PC-9 (cell line): ENCODE measurements at regions of chr12 and their contacts with region 1.

Region 1: GRCh38 chr12:53065975-53066931 is 12.9 kb downstream of the SPRYD3 start:
- DNase-seq: peak; percentile 53 to 74
- H3K4me3 ChIP-seq: no peak overlapping the region
- H3K27ac ChIP-seq: peak overlapping the region; percentile 50; the same call in 1 of the 2 replicates
- H3K4me1 ChIP-seq: peaks cover 25% of the 10 kb centered on the region
- H3K27me3 ChIP-seq: no peaks in the 10 kb centered on the region
- CTCF ChIP-seq: peak; percentile 91

Region 2: GRCh38 chr12:53054112-53054833 is 12.0 kb before region 1 on chr12:
- CTCF ChIA-PET with region 1: interaction called, 22 read pairs
- POLR2A ChIA-PET with region 1: no interaction called
- intact Hi-C with region 1: no loop called
- DNase-seq: peak; percentile 87 to 94
- H3K4me3 ChIP-seq: peak overlapping the region; percentile 95
- H3K27ac ChIP-seq: peak overlapping the region; percentile 71
- H3K4me1 ChIP-seq: peaks cover 19% of the 10 kb centered on the region
- H3K27me3 ChIP-seq: no peaks in the 10 kb centered on the region
- CTCF ChIP-seq: no peak

Region 3: DNA sequence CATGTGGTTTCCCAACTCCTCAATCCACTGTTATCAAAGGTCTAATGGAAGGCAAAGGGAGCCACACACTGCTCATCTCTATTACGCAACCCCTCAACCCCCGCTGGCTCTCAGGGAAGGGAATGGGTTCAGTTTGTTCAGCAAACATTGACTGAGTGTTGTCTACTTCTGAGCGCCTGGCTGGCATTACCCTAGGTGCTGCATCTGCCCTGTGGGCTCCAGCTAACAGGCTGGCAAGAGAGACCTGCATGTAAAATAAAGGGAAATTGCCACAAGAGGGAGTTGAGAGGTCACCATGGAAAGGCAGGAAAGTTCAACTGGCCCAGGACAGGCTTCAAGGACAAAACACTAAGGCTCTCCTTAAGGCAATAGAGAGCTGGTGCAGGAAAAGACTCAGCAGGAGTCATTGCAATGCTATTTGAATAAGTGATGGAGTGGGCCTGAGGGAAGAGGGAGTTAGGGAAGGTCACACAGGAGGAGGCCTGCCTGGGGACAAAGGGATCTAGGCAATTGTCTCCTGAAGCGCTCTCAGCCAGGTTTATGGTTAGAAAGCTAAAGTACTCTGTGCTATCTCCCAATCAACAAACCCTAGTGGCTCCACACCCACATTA is 108.7 kb after region 1 on chr12:
- CTCF ChIA-PET with region 1: no interaction called
- POLR2A ChIA-PET with region 1: interaction called, 10 read pairs
- intact Hi-C with region 1: loop called (anchors 10 kb)
- DNase-seq: peak; percentile 21 to 63
- H3K4me3 ChIP-seq: no peak overlapping the region
- H3K27ac ChIP-seq: no peak overlapping the region
- H3K4me1 ChIP-seq: peaks cover 26% of the 10 kb centered on the region
- H3K27me3 ChIP-seq: no peaks in the 10 kb centered on the region
- CTCF ChIP-seq: peak; percentile 42; the same call in 1 of the 2 replicates

Region 4: DNA sequence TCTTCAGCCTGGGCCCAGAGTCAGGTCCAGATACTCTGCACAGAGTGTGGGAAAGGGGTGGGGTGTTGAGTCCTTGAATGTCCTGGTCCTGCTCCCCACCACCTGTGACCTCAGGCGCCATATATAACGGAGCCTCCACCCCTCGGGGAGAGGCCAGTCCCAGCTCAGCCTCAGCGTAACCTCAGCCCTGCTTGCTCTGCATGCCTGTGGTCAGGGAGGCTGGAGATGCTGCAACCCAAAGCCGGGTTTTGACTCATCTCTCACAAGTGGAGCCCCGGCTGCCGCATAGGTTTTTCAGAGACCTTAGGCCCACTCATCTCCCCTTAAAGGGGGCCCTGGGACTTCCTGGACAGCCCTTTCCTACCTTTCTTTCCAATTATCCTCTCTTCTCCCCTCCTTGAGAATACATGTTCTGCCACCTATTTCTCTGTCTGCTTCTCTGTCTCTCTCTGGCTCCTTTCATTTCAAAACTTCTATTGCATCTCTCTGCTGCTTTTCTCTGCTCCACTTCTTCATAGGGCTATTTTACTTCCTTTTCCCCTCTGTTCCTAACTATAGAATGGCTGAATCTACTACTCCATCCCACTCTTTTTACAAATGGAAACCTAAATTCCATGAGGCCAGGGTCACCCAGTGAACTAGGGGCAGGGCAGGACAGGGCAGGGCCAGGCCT is 139.6 kb after region 1 on chr12:
- CTCF ChIA-PET with region 1: no interaction called
- POLR2A ChIA-PET with region 1: no interaction called
- intact Hi-C with region 1: loop called (anchors 10 kb)
- DNase-seq: peak; percentile 59 to 70
- H3K4me3 ChIP-seq: no peak overlapping the region
- H3K27ac ChIP-seq: peak overlapping the region; percentile 36; the same call in 1 of the 2 replicates
- H3K4me1 ChIP-seq: peaks cover 17% of the 10 kb centered on the region
- H3K27me3 ChIP-seq: no peaks in the 10 kb centered on the region
- CTCF ChIP-seq: no peak

Region 5: GRCh38 chr12:53500776-53501614 is 434.7 kb after region 1 on chr12 and contains the start of gene TARBP2:
- CTCF ChIA-PET with region 1: no interaction called
- POLR2A ChIA-PET with region 1: no interaction called
- intact Hi-C with region 1: loop called (anchors 10 kb)
- DNase-seq: peak; percentile 98
- H3K4me3 ChIP-seq: peak within 1 kb of the TSS; percentile 77
- H3K27ac ChIP-seq: peak within 1 kb of the TSS; percentile 81
- H3K4me1 ChIP-seq: peaks cover 17% of the 10 kb centered on the region
- H3K27me3 ChIP-seq: no peaks in the 10 kb centered on the region
- CTCF ChIP-seq: no peak
- total RNA-seq, gene TARBP2: 47.8 and 53.3 TPM in 2 replicates